Posterior cingulate gyrus (tissue), 11 donors: ENCODE measurements at regions of chr3 and their contacts with region 1.

Region 1: DNA sequence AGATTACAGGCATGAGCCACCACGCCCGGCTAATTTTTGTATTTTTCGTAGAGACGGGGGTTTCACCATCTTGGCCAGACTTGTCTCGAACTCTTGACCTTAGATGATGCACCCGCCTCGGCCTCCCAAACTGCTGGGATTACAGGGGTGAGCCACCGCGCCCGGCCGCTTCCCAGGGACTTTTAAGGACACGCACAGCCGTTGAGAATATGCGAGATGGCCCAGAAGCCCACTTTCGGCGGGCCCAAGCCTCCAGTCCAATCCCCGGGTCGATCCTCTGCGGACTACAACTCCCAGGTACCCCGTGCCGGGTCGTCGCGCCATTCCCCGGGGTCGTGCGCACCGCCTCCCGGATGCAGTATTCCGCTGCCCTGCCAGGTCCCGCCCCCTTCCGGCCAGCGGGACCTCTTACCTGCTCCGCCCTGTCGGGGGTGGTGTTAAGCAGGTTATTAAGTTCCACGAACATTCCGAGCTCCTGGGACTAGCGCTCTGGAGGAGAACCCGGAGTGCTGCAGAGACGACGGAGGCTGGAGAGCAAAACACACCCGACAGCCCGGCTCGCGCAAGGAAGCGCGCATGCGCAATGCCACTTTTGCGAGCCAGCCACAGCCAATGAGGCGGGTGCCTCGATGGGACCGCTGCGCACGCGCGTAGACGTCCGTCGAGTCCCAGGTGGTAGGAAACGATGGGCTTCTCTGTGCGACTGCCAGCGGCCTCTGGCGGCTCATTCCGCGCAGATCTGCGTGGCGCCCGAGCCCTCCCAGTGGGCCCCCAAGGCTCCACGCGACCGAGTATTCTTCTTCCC is at the start of gene ELP6:
- DNase-seq: peak; percentile 94 to 99 (median 96)

Region 2: DNA sequence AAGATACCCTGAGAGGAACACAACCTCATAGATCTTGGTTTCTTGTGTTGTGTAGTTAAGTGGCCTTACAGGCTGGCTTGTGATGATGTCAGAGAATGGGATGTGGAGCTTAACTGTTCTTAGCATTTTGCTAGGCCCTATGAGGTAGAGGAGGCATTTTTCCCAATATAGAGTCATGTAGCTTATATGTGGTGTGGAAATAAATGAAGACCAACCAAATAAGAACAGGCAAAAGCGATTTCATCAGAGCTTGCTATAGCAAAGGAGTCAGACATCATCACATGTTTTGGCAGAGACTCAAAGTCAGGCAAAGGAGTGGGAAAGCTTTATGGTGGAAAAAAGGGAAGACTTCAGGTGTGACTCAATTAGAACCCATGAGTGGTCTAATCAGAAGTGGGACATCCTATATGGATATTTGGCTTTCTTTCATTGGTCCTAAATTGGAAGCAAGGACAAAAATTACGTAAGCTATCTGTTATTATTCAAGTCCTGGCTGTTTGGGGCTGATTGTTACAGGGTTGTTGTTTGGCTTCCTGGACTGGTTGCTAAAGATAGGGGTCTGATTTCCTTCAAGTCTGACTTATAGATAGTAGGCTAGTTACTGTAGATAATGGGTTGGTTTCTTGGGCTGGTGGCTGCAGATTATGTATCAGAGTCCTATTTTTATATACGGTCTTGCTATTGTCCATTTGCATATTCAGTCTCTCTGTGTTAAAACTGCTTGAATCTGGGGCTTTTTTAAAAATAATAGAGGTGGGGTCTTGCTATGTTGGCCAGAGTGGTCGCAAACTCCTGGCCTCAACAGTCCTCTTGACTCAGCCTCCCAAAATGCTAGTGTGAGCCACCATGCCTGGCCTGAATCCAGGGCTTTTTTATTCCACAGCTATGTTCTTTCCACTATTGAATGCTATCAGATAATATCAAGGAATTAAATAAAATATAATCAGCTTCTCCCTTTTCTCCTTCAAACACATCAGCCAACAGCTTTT is 319.2 kb before region 1 on chr3:
- intact Hi-C with region 1: no loop called
- DNase-seq: no peak

Region 3: DNA sequence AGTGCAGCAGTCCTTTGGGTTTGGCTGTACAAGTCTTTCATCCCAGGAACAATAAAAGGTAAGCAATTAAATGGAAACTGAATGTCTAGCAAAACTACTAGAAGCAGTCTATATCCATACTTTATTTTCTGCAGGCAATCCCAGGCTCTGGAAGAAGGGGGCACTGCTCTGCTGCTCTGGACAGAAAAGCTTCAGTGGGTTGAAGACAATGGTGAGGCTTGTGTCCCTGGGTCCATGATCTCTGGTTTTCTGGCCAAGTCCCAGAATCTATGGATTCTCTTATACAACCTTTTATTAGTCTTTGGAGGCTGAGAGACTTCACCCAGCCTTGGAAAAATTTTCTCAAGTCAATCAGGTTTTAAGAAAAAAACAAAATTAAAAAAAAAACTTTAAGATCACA is 73.2 kb before region 1 on chr3:
- intact Hi-C with region 1: loop called (anchors 2 kb)
- DNase-seq: peak in 5 of 10 donors; percentile 21 to 89 (median 45)

Region 4: GRCh38 chr3:47664519-47664918 is 151.2 kb after region 1 on chr3:
- intact Hi-C with region 1: no loop called
- DNase-seq: no peak